ENCODE measurements at regions of chr10 and their contacts with region 1.

Region 1: DNA sequence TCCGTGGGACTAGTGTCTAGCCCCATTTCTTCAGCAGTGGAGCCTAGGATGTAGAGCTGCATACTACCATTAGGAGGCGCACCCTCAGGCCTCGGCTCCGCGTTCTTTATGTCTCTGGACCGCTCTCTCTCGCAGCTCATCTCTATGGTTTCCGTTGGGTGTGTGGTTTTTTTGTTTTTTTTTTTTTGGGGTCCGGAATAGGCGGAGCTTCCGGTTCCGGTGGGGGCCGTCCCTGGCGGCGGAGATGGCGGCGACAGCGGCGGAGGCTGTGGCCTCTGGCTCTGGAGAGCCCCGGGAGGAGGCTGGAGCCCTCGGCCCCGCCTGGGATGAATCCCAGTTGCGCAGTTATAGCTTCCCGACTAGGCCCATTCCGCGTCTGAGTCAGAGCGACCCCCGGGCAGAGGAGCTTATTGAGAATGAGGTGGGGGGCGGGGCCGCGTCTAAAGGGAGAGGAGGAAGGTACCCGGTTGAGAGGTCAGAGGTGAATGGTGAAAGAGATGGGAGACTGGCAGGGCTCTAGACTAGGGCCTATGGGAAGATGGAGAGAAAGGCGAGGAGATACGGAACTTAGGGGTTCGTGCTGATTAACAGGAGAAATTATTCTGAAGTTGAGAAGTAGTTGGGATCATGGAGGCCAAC is at the start of gene HIF1AN:
- H3K4me3 ChIP-seq: peak within 1 kb of the TSS; percentile 79
- H3K27ac ChIP-seq: peak within 1 kb of the TSS; percentile 21; the same call in 1 of the 2 replicates
- H3K4me1 ChIP-seq: peaks cover 15% of the 10 kb centered on the region
- CTCF ChIP-seq: peak; percentile 99

Region 2: DNA sequence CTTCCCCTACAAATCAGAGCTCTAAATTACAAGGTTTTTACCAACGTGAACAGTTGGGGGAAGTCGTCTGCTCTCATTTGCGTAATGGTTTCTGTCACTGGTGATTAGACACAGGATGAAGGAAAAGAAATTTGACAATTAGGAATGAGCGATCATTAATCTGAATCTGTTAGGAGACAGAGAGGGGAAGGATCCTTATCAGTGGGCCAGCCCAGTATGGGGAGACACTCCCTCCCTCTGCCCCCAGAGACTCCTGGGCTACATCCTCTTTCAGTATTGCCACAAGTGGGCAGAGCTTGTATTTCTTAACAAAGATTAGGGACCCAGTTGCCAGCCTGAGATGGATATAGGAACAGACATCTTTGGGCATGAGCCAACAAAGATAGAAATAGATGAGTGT is 15.4 kb after region 1 on chr10:
- CTCF ChIA-PET with region 1: interaction called, 8 read pairs
- POLR2A ChIA-PET with region 1: interaction called, 16 read pairs
- H3K4me3 ChIP-seq: no peak overlapping the region
- H3K27ac ChIP-seq: no peak overlapping the region
- H3K4me1 ChIP-seq: no peaks in the 10 kb centered on the region
- CTCF ChIP-seq: no peak

Region 3: DNA sequence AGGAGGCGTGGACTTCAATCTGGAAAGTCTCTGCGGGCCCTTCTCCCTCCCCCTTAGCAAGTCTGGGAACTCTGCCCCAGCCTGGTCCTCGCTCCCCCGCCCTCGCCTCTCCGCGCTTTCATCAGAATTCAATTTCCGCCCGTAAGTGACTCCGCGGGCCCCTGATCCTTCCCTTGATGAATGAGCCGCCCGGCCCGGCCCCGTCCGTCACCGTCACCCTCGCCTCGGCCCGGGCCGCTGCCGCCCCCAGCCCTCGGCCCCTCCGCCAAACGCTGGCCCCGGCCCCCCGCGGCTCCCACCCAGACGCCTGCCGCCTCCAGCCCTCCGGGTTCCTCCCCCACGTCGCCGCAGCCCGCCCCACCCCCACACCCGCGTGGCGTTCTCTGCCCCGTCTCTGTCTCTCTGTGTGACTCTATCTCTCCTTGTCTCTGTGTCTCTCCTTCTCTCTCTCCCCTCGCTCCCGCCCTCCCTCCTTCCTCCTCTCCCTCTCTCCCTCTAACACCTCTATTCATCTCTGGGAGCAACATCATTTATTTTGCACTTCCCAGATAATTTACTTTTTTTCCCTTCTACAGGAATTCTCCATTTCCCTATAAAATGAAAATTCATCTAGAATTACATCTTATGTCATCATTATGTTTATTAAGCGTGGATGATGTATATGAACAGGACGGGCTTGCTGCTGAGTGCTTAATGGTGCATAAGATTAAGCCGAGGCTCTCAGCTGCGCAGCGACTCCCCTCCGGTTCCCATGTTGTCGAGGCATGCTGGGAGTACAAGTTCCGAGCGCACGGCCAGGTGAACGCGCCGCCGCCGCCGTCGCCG is 118.3 kb after region 1 on chr10:
- CTCF ChIA-PET with region 1: no interaction called
- POLR2A ChIA-PET with region 1: no interaction called
- H3K4me3 ChIP-seq: peak overlapping the region; percentile 16
- H3K27ac ChIP-seq: peak overlapping the region; percentile 90
- H3K4me1 ChIP-seq: peaks cover 9% of the 10 kb centered on the region
- CTCF ChIP-seq: no peak